Activated CD4-positive, alpha-beta T cell treated with anti-CD3 and anti-CD28 coated beads, Interleukin-2, amount 10 ng/mL, durations not matched to agents 7 days and 5 days (primary cell): ENCODE measurements at regions of chr11 and their contacts with region 1.

Region 1: DNA sequence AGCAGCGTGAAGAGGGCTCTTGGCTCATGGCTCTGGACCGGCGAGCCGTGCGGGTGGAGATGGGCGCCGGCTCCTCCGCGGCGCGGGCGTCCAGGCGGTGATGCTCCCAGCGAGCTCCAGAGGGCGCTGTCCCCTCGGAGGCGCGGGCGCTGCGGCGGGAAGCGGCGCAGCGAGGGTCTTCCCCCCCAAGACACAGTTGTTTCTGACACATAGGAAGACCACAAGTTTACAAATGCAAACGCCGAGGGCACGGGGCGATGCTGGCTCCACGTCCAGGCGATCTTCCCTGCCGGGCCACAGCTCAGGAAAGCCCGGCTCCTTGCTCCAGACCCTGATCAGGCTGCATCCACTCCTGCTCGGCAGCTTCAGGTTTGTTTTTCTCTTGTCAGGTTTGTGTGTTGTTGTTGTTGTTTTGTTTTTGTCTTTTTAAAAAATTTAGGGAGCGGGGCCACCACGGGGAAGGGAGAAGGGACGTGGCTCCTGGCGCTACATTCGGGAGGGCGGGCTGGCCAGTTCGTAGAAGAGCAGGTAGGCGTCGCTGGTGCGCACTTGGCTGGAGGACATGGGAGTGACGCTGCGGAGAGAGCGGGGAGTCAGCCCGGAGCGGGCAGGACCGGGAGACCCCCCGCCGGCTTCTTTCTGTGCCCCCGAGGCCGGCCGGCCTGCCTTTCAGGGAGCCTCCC is 10.0 kb upstream of the MFRP start:
- DNase-seq: peak; percentile 74
- H3K4me3 Mint-ChIP-seq: peak overlapping the region; percentile 76
- H3K27ac Mint-ChIP-seq: peak overlapping the region; percentile 7
- H3K4me1 Mint-ChIP-seq: peaks cover 16% of the 10 kb centered on the region
- H3K27me3 Mint-ChIP-seq: peaks cover 32% of the 10 kb centered on the region

Region 2: DNA sequence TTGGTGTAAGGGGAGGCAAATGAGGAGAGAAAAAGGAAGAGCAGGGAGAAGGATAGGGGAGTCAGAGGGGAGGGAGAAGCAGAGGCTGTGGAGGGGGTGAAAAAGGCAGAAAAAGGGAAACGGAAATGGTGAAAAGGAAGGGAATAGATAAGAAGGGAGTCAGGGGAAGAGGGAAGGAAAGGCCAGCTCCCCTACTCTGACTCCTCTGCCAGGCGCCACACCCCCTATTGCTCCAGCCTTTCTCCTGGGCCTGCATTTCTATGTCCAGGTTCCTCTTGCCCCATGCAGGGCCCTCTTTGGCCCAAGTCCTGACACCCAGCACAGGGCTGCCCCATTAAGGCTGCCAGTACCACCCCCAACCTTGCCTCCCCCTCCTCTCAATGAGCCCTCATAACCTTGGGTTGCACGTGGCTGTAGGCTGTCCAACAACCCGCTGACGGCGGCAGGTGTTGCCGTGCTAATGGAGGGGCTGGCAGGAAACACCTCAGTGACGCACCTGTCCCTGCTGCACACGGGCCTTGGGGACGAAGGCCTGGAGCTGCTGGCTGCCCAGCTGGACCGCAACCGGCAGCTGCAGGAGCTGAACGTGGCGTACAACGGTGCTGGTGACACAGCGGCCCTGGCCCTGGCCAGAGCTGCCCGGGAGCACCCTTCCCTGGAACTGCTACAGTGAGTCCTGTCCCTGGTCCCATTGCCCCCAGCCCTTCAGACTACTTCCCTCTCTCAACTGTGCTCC is 174.6 kb before region 1 on chr11:
- CTCF ChIA-PET with region 1: no interaction called
- POLR2A ChIA-PET with region 1: no interaction called
- DNase-seq: no peak
- H3K4me3 Mint-ChIP-seq: no peak overlapping the region
- H3K27ac Mint-ChIP-seq: no peak overlapping the region
- H3K4me1 Mint-ChIP-seq: peaks cover 16% of the 10 kb centered on the region
- H3K27me3 Mint-ChIP-seq: no peaks in the 10 kb centered on the region

Region 3: GRCh38 chr11:119218141-119218878 is 138.2 kb before region 1 on chr11:
- CTCF ChIA-PET with region 1: no interaction called
- POLR2A ChIA-PET with region 1: no interaction called
- DNase-seq: no peak
- H3K4me3 Mint-ChIP-seq: no peak overlapping the region
- H3K27ac Mint-ChIP-seq: no peak overlapping the region
- H3K4me1 Mint-ChIP-seq: peaks cover 36% of the 10 kb centered on the region
- H3K27me3 Mint-ChIP-seq: no peaks in the 10 kb centered on the region

Region 4: DNA sequence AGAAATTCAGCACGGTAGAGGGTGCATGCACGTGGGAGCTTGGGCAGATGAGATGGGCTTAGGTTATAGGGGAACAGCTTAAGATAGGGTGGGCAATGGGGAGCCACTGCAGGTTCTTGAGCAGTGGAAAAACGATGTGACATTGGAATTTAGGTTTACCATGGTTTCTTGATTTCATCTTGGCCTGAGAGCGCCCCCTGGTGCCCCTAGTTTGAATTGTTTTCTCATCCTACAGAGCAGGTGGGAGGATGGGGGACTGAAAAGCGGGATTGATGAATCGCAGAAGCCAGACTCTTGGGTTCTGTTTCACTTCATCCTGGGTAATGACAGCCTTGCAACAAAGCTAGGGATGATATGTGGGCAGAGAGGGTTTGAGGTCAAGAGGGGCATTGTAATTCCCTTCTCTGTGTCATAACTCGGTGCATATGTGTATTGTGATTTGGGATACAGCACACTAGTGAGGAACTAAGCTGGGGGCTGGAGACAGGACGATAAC is 32.9 kb before region 1 on chr11:
- CTCF ChIA-PET with region 1: interaction called, 11 read pairs
- POLR2A ChIA-PET with region 1: no interaction called
- DNase-seq: peak; percentile 84
- H3K4me3 Mint-ChIP-seq: no peak overlapping the region
- H3K27ac Mint-ChIP-seq: no peak overlapping the region
- H3K4me1 Mint-ChIP-seq: peaks cover 33% of the 10 kb centered on the region
- H3K27me3 Mint-ChIP-seq: peaks cover 13% of the 10 kb centered on the region

Region 5: GRCh38 chr11:119338318-119338907 is 18.1 kb before region 1 on chr11:
- CTCF ChIA-PET with region 1: interaction called, 50 read pairs
- POLR2A ChIA-PET with region 1: no interaction called
- DNase-seq: peak; percentile 73
- H3K4me3 Mint-ChIP-seq: no peak overlapping the region
- H3K27ac Mint-ChIP-seq: no peak overlapping the region
- H3K4me1 Mint-ChIP-seq: peaks cover 59% of the 10 kb centered on the region
- H3K27me3 Mint-ChIP-seq: peaks cover 30% of the 10 kb centered on the region

Region 6: DNA sequence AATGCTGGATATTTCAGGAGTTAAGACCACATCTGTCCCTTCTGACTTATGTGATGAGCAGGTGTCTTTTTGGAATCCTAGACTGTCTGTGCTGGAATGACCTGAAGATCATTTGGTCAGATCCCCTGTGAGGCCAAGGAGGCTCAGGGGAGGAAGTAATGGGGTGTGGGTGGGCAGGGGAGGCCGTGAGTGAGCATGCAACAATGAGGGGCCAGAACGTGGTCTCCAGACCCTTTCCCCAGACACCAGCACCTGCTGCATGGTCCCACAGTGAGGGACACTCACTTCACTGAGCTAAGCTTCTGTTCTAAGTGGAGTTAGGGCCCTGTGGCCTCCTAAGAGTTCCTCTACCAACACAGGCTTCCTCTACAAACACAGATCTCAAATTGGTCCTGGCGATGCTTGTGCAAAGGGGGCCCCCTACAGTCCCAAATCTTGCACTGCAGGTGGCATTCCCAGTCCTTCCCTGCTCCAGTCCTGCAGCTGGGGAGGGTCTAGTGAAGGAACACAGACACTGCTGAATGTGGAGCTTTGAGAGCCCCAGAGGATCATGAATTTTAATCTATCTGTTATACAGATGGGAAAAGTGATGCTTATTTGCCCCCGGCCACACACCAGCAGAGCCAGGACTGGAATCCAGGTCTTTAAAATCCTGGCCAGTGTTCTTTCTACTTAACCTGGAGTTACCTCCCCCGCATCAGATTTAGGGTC is 17.6 kb after region 1 on chr11:
- CTCF ChIA-PET with region 1: interaction called, 99 read pairs
- POLR2A ChIA-PET with region 1: no interaction called
- DNase-seq: peak; percentile 34
- H3K4me3 Mint-ChIP-seq: no peak overlapping the region
- H3K27ac Mint-ChIP-seq: no peak overlapping the region
- H3K4me1 Mint-ChIP-seq: peaks cover 10% of the 10 kb centered on the region
- H3K27me3 Mint-ChIP-seq: peaks cover under 1% of the 10 kb centered on the region

Region 7: DNA sequence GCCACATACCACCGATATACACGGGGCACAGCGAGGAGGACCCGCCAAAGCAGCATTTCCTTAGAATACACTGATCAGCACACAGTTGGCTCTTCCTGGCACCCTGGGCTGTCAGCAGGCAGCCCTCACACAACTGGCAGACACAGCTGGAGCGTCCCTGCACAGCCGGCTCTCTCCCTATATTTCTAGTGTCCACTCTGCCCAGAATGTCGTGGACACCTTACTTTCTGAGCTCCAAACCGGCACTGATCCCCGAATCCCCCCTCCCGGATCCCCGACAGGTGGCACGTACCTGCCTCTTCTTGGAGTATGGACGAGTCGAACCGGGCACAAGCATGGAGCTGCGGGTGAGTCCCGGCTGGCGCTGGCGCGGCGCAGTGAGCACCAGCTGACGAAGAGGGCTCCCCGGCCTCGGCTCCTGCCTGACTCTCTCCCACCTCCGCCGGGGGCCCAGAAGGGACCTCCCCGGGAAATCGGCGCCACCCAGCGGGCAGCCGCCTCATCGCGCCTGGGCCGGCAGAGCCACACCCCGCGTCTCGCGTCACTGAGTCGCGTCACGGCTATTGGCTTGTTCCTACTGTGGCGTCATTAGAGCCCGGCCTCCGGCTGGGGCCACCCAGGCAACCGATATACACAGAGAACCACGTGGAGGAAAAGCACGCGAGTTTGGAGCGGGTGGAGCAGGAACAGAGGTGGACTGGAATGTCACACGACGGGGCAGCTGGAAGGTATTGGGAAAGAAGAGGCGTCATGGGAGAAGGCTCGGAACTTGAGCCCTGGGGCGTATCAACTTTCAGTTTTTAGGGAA is 24.9 kb after region 1 on chr11 and contains the start of gene USP2:
- CTCF ChIA-PET with region 1: interaction called, 99 read pairs
- POLR2A ChIA-PET with region 1: no interaction called
- DNase-seq: peak; percentile 95
- H3K4me3 Mint-ChIP-seq: no peak within 1 kb of the TSS
- H3K27ac Mint-ChIP-seq: peak within 1 kb of the TSS; percentile 51
- H3K4me1 Mint-ChIP-seq: peaks cover 7% of the 10 kb centered on the region
- H3K27me3 Mint-ChIP-seq: peaks cover 6% of the 10 kb centered on the region
- total RNA-seq, gene USP2: 0.17 to 0.22 TPM

Region 8: GRCh38 chr11:119474682-119475596 is 118.4 kb after region 1 on chr11:
- CTCF ChIA-PET with region 1: interaction called, 24 read pairs
- POLR2A ChIA-PET with region 1: no interaction called
- DNase-seq: peak; percentile 59
- H3K4me3 Mint-ChIP-seq: no peak overlapping the region
- H3K27ac Mint-ChIP-seq: no peak overlapping the region
- H3K4me1 Mint-ChIP-seq: no peaks in the 10 kb centered on the region
- H3K27me3 Mint-ChIP-seq: peaks cover 3% of the 10 kb centered on the region